CD4-positive, alpha-beta memory T cell (primary cell): ENCODE measurements at regions of chr1 and their contacts with region 1.

Region 1: GRCh38 chr1:53196485-53197270 is at the start of gene CPT2:
- DNase-seq: peak; percentile 90 to 92 (median 91)
- H3K4me3 ChIP-seq: peak within 1 kb of the TSS; percentile 31 to 98
- H3K4me3 Mint-ChIP-seq: peak within 1 kb of the TSS; percentile 92 to 98 (median 96)
- H3K27ac ChIP-seq: peak within 1 kb of the TSS; percentile 91
- H3K27ac Mint-ChIP-seq: peak within 1 kb of the TSS; percentile 93 to 100 (median 99)
- H3K4me1 ChIP-seq: peaks cover 26% of the 10 kb centered on the region
- H3K4me1 Mint-ChIP-seq: peaks cover 15 to 40% (median 29%) of the 10 kb centered on the region in 4 donors
- H3K27me3 ChIP-seq: no peaks in the 10 kb centered on the region
- H3K27me3 Mint-ChIP-seq: no peaks in the 10 kb centered on the region
- total RNA-seq, gene CPT2: 17.8 to 18.9 TPM

Region 2: GRCh38 chr1:53182111-53182593 is 14.5 kb before region 1 on chr1:
- CTCF ChIA-PET with region 1: interaction called, 11 read pairs
- POLR2A ChIA-PET with region 1: interaction called, 7 read pairs
- intact Hi-C with region 1: no loop called
- DNase-seq: peak; percentile 64 to 77 (median 72)
- H3K4me3 ChIP-seq: no peak overlapping the region
- H3K4me3 Mint-ChIP-seq: no peak overlapping the region
- H3K27ac ChIP-seq: no peak overlapping the region
- H3K27ac Mint-ChIP-seq: no peak overlapping the region
- H3K4me1 ChIP-seq: peaks cover 5% of the 10 kb centered on the region
- H3K4me1 Mint-ChIP-seq: no peaks in the 10 kb centered on the region
- H3K27me3 ChIP-seq: peaks cover 1% of the 10 kb centered on the region
- H3K27me3 Mint-ChIP-seq: peaks cover 4 to 6% of the 10 kb centered on the region in 2 donors

Region 3: GRCh38 chr1:53220171-53220961 is 23.7 kb after region 1 on chr1 and contains the start of gene CZIB:
- CTCF ChIA-PET with region 1: interaction called, 3 read pairs
- POLR2A ChIA-PET with region 1: interaction called, 46 read pairs
- intact Hi-C with region 1: loop called (anchors 1 kb)
- DNase-seq: peak; percentile 90 to 95 (median 91)
- H3K4me3 ChIP-seq: peak within 1 kb of the TSS; percentile 49 to 81
- H3K4me3 Mint-ChIP-seq: peak within 1 kb of the TSS; percentile 88 to 95 (median 94)
- H3K27ac ChIP-seq: peak within 1 kb of the TSS; percentile 95
- H3K27ac Mint-ChIP-seq: peak within 1 kb of the TSS; percentile 91 to 99 (median 98)
- H3K4me1 ChIP-seq: peaks cover 17% of the 10 kb centered on the region
- H3K4me1 Mint-ChIP-seq: peaks cover 16 to 28% (median 22%) of the 10 kb centered on the region in 4 donors
- H3K27me3 ChIP-seq: no peaks in the 10 kb centered on the region
- H3K27me3 Mint-ChIP-seq: no peaks in the 10 kb centered on the region
- total RNA-seq, gene CZIB: 82.4 to 82.5 TPM

Region 4: GRCh38 chr1:53238197-53239155 is 41.8 kb after region 1 on chr1 and contains the start of gene MAGOH:
- CTCF ChIA-PET with region 1: interaction called, 3 read pairs
- POLR2A ChIA-PET with region 1: interaction called, 10 read pairs
- intact Hi-C with region 1: loop called (anchors 1 kb)
- DNase-seq: peak; percentile 93 to 95 (median 94)
- H3K4me3 ChIP-seq: peak within 1 kb of the TSS; percentile 87 to 96
- H3K4me3 Mint-ChIP-seq: peak within 1 kb of the TSS; percentile 96 to 99 (median 97)
- H3K27ac ChIP-seq: peak within 1 kb of the TSS; percentile 87
- H3K27ac Mint-ChIP-seq: peak within 1 kb of the TSS; percentile 97 to 99 (median 98)
- H3K4me1 ChIP-seq: peaks cover 31% of the 10 kb centered on the region
- H3K4me1 Mint-ChIP-seq: peaks cover 21 to 36% (median 29%) of the 10 kb centered on the region in 4 donors
- H3K27me3 ChIP-seq: no peaks in the 10 kb centered on the region
- H3K27me3 Mint-ChIP-seq: no peaks in the 10 kb centered on the region
- total RNA-seq, gene MAGOH: 46.7 to 49.9 TPM